Thyroid gland (tissue), 4 donors: ENCODE measurements at regions of chr10 and their contacts with region 1.

Region 1: GRCh38 chr10:91758303-91759146 is 39.7 kb upstream of the TNKS2 start:
- DNase-seq: no peak
- H3K4me3 ChIP-seq: no peak overlapping the region
- H3K27ac ChIP-seq: no peak overlapping the region
- H3K4me1 ChIP-seq: no peaks in the 10 kb centered on the region
- H3K27me3 ChIP-seq: no peaks in the 10 kb centered on the region
- CTCF ChIP-seq: peak in 4 of 6 experiments; percentile 45 to 69 (median 62)
- POLR2A ChIP-seq: no peak

Region 2: DNA sequence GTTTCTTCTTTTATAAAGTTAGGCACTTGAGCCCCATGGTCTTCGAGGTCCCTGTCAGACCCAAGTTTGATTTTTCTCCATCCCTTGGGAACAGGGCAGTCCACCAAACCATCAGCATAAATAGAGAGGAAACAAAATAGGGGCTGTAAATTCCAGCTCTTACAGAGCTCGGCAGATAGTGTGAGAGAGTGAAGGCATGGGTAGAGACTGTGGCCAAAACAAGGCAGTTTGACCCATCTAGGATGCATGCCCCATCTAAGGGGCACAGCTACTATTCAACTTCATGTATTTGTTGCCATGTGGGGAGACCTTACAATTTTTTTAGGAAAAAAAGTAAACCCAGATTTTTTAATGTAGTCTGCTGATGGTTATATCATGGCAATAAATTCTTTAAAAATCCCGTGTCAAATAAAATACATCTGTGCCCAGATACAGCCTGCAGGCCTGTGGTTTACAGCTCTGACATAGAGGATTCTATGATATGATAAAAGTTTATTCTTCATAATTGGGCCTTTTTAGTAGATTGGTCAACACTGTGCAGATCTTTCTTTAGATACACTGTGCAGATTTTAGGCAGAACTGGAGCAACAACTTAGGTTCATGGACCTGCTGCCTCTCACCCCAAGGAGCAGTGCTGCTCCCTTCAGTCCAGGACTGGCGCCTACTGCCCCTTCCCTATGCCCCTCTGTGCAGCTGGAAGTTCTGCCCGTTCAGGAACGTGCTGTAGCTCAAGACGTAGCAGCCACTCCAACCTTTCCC is 131.0 kb before region 1 on chr10:
- intact Hi-C with region 1: no loop called
- DNase-seq: no peak
- H3K4me3 ChIP-seq: no peak overlapping the region
- H3K27ac ChIP-seq: no peak overlapping the region
- H3K4me1 ChIP-seq: no peaks in the 10 kb centered on the region
- H3K27me3 ChIP-seq: no peaks in the 10 kb centered on the region
- CTCF ChIP-seq: no peak
- POLR2A ChIP-seq: no peak

Region 3: GRCh38 chr10:91711885-91712680 is 46.4 kb before region 1 on chr10:
- intact Hi-C with region 1: no loop called
- DNase-seq: no peak
- H3K4me3 ChIP-seq: no peak overlapping the region
- H3K27ac ChIP-seq: no peak overlapping the region
- H3K4me1 ChIP-seq: peaks cover 6 to 7% of the 10 kb centered on the region in 2 donors
- H3K27me3 ChIP-seq: no peaks in the 10 kb centered on the region
- CTCF ChIP-seq: no peak
- POLR2A ChIP-seq: no peak

Region 4: GRCh38 chr10:91820144-91820543 is 61.6 kb after region 1 on chr10:
- intact Hi-C with region 1: no loop called
- DNase-seq: no peak
- H3K4me3 ChIP-seq: no peak overlapping the region
- H3K27ac ChIP-seq: no peak overlapping the region
- H3K4me1 ChIP-seq: no peaks in the 10 kb centered on the region
- H3K27me3 ChIP-seq: no peaks in the 10 kb centered on the region
- CTCF ChIP-seq: no peak
- POLR2A ChIP-seq: no peak

Region 5: DNA sequence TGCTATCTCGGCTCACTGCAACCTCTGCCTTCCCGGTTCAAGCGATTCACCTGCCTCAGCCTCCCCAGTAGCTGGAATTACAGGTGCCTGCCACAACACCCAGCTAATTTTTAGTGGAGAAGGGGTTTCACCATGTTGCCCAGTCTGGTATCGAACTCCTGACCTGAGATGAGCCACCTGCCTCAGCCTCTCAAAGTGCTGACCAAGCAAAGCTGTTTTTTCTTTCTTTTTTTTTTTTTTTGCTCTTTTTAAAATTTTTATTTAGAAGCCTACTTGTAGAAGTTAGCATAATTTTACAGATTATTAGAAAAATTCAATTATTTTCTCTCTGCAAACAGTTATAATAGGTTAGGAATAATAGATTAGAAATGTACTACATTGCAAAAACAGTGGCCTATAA is 151.9 kb after region 1 on chr10:
- intact Hi-C with region 1: loop called (anchors 5 kb)
- DNase-seq: no peak
- H3K4me3 ChIP-seq: no peak overlapping the region
- H3K27ac ChIP-seq: no peak overlapping the region
- H3K4me1 ChIP-seq: peaks cover 0 to 6% of the 10 kb centered on the region in 2 donors
- H3K27me3 ChIP-seq: no peaks in the 10 kb centered on the region
- CTCF ChIP-seq: no peak
- POLR2A ChIP-seq: no peak